ENCODE measurements at regions of chr1 and their contacts with region 1.

Region 1: DNA sequence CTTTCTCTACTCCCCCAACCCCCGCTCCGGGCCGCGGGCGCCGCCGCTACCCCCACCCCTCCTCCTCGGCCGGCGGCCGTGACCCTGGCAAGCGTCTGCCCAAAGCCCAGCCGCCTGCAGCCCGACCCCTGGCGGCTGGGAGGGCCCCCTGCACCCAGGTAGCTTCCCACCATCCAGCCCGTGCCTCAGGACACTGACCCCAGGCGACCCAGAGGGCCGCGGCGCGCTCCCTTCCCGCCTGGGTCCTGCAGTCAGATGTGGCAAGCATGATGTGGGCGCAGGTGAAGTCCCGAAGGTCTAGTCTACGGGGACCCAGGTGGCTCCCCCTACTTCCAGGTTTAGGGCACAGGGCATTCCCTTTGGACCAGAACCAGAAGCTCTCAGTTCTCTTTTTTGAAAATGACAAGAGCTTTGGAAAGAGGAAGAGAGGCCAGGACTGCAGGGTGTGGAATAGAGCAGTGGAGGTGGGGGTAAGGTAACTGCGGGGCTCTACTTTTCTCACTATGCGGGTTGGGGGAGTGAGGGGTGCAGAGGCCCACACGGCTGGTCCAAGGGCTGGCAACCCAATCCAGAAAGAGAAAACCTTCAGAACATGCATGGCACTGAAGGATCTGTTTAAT is at the start of gene DENND4B:
- DNase-seq: peak; percentile 75
- ATAC-seq: peak; percentile 93
- H3K4me3 ChIP-seq: peak within 1 kb of the TSS; percentile 71 to 98 (median 81)
- H3K27ac ChIP-seq: peak within 1 kb of the TSS; percentile 71
- H3K4me1 ChIP-seq: peaks cover 40% of the 10 kb centered on the region
- H3K27me3 ChIP-seq: no peaks in the 10 kb centered on the region
- CTCF ChIP-seq: peak; percentile 92
- EP300 ChIP-seq: 0 out of 4 replicates have a peak, but pooled peaks of 1 of the 2 experiments have one; percentile 31
- POLR2A ChIP-seq: 0 out of 4 replicates have a peak, but pooled peaks of 1 of the 2 experiments have one; percentile 5
- RAD21 ChIP-seq: peak; percentile 85
- total RNA-seq, gene DENND4B: 8.7 and 15.1 TPM in 2 replicates

Region 2: GRCh38 chr1:153816283-153816889 is 130.3 kb before region 1 on chr1:
- CTCF ChIA-PET with region 1: interaction called, 3 read pairs
- POLR2A ChIA-PET with region 1: interaction called, 3 read pairs
- in situ Hi-C with region 1: loop called (anchors 10 kb)
- intact Hi-C with region 1: loop called (anchors 1 kb)
- DNase-seq: no peak
- ATAC-seq: no peak
- H3K4me3 ChIP-seq: no peak overlapping the region
- H3K27ac ChIP-seq: no peak overlapping the region
- H3K4me1 ChIP-seq: no peaks in the 10 kb centered on the region
- H3K27me3 ChIP-seq: no peaks in the 10 kb centered on the region
- CTCF ChIP-seq: no peak
- EP300 ChIP-seq: no peak
- POLR2A ChIP-seq: no peak
- RAD21 ChIP-seq: no peak

Region 3: DNA sequence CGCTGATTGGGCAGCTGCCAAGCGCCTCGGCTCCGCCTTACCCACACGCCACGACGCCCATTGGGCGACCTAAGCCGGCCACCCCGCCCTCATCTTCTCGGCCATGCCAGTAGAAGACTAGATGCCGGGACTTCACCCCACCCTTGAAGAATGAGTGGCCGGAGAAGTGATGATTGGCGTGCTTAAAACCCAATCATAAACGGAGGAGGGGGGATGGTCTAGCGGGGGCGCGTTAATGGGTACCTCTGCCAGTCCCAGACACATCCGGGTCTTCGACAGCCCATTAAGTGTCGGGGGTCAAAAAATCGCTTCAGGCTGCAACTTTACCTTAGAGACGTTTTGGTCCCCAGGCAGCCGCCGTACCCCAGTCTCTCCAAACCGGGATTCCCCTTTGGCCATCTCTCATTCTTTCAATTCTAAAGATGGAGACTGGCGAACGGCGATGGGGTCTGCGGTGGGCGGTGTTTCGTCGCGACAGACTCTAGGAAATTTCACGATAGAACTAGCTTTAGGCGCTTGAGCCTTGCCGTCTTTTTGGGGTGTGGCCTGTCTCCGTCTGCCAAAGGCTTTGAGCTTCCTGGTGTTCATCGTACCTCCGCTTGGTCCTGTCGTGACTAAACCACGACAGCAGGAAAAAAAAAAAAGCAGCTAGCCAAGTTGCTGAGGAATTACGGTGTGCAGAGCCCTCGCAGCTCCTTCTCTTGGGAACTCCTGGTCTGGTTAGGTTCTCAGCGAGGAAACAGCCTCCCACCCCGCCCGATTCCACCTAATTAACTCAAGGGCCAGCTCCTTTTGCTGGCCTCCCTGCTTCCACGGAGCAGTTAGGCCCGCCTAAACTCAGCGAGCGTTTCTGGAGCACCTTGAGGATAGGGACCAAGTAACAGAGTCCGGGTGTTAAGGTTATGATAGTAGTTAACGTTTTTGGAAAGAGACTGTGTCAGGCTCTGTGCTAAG is 23.5 kb before region 1 on chr1 and contains the start of gene GATAD2B:
- CTCF ChIA-PET with region 1: no interaction called
- POLR2A ChIA-PET with region 1: interaction called, 20 read pairs
- in situ Hi-C with region 1: no loop called
- intact Hi-C with region 1: no loop called
- DNase-seq: peak; percentile 99
- ATAC-seq: peak; percentile 95
- H3K4me3 ChIP-seq: peak within 1 kb of the TSS; percentile 80
- H3K27ac ChIP-seq: peak within 1 kb of the TSS; percentile 83
- H3K4me1 ChIP-seq: peaks cover 37% of the 10 kb centered on the region
- H3K27me3 ChIP-seq: no peaks in the 10 kb centered on the region; a peak in 2 of 5 replicates
- CTCF ChIP-seq: no peak
- EP300 ChIP-seq: no peak; a peak in 1 of 4 replicates
- POLR2A ChIP-seq: peak; percentile 34 to 61; a peak in 2 of 4 replicates
- RAD21 ChIP-seq: no peak; the same call in 1 of the 2 replicates
- total RNA-seq, gene GATAD2B: 3.2 and 5.3 TPM in 2 replicates

Region 4: DNA sequence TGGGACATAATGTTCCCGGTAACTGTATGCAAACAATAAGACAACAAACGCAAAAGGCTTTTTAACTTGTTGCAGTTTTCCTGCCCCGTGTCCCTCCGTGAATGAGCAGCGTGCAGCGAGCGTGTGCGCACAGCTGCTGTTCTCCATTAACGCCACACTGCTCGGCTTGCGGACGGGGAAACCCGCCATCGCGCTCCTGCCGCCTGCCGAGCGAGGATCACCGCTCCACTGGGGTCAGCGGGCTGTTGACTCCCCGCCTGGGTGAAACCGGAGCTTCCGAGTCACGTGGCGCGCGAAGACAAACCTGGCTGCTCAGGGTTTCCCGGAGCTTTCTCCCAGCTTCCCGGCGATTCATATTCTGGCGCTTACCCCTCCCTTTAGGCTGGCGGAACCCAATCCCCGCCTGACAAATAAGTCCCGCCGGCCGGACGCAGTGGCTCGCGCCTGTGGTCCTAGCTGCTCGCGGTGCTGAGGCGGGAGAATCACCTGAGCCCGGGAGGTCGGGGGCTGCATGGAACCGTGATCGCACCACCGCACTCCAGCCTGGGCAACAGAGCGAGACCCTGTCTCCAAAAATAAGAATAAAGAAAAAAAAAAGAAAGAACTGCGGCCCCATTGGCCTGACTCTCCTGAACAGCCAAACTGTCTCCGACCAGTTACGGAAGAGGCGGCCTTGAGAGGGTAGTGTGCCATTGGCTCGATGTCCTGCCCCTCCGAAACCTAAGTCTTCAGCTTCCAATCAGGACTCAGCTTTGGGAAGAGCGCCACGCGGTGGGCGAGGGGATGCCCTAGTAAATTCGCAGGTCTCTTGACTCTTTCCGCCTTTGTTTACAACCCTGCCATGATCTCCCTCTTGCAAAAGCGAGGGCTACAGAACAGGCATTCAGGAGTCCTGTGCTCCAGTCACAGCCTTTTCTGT is 20.6 kb after region 1 on chr1 and contains the start of gene CREB3L4:
- CTCF ChIA-PET with region 1: no interaction called
- POLR2A ChIA-PET with region 1: interaction called, 43 read pairs
- in situ Hi-C with region 1: no loop called
- intact Hi-C with region 1: no loop called
- DNase-seq: peak; percentile 97
- ATAC-seq: peak; percentile 86
- H3K4me3 ChIP-seq: peak within 1 kb of the TSS; percentile 62 to 82 (median 72)
- H3K27ac ChIP-seq: peak within 1 kb of the TSS; percentile 83
- H3K4me1 ChIP-seq: peaks cover 30% of the 10 kb centered on the region
- H3K27me3 ChIP-seq: no peaks in the 10 kb centered on the region; a peak in 1 of 5 replicates
- CTCF ChIP-seq: peak; percentile 81
- EP300 ChIP-seq: 0 out of 4 replicates have a peak, but pooled peaks of 1 of the 2 experiments have one; percentile 17
- POLR2A ChIP-seq: peak; percentile 93 to 96
- RAD21 ChIP-seq: peak; percentile 63; the same call in 1 of the 2 replicates
- total RNA-seq, gene CREB3L4: 7.8 and 9.9 TPM in 2 replicates

Region 5: GRCh38 chr1:154272217-154272998 is 325.7 kb after region 1 on chr1 and contains the start of gene HAX1:
- CTCF ChIA-PET with region 1: no interaction called
- POLR2A ChIA-PET with region 1: no interaction called
- in situ Hi-C with region 1: no loop called
- intact Hi-C with region 1: loop called (anchors 5 kb)
- DNase-seq: peak; percentile 89
- ATAC-seq: peak; percentile 94
- H3K4me3 ChIP-seq: peak within 1 kb of the TSS; percentile 86 to 97 (median 90)
- H3K27ac ChIP-seq: peak within 1 kb of the TSS; percentile 69
- H3K4me1 ChIP-seq: peaks cover 12% of the 10 kb centered on the region
- H3K27me3 ChIP-seq: no peaks in the 10 kb centered on the region; a peak in 1 of 5 replicates
- CTCF ChIP-seq: peak; percentile 94
- EP300 ChIP-seq: peak in 1 of 2 experiments; percentile 23; a peak in 2 of 4 replicates
- POLR2A ChIP-seq: peak; percentile 42 to 58; a peak in 3 of 4 replicates
- RAD21 ChIP-seq: peak; percentile 92
- total RNA-seq, gene HAX1: 89.2 and 104 TPM in 2 replicates

Measured in HepG2 (cell line).